ENCODE measurements at regions of chrX and their contacts with region 1.

Region 1: DNA sequence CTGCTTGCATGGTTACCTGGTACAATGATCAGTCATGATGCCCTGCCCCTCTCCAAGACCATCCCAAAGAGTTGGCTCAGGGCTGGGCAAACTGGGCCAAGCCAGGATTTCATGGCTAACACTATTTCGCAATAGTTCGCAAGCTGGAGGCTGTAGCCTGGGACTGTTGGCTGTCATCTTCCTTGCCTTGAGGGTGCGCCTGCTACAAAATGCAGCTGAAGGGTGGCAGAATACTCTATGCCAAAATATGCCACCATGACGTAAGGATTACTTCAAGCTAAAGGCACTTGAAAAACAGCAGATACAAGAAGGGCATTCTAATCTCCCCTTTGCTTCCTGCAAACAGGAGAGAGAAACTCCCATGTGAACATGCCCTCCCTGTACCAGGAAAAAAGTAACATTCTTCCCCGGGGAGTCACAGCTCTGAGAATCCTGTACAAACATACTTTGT is 21.0 kb downstream of the SAT1 start:
- DNase-seq: no peak
- ATAC-seq: peak; percentile 86

Region 2: DNA sequence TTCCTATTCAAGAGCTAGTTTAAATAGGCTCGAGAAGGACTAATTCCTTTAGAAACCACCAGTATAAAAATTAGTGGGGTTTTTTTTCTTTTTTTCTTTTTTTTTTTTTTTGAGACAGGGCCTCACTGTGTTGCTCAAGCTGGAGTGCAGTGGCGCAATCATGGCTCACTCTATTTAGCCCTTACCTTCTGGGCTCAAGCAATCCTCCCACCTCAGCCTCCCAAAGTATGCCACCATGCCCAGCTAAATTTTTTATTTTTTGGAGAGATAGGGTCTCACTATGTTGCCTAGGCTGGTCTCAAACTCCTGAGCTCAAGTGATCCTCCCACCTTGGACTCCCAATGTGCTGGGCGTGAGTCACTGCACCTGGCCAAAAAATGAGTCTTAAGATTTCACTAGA is 51.0 kb after region 1 on chrX:
- intact Hi-C with region 1: loop called (anchors 5 kb)
- DNase-seq: peak; percentile 66
- ATAC-seq: no peak

Region 3: DNA sequence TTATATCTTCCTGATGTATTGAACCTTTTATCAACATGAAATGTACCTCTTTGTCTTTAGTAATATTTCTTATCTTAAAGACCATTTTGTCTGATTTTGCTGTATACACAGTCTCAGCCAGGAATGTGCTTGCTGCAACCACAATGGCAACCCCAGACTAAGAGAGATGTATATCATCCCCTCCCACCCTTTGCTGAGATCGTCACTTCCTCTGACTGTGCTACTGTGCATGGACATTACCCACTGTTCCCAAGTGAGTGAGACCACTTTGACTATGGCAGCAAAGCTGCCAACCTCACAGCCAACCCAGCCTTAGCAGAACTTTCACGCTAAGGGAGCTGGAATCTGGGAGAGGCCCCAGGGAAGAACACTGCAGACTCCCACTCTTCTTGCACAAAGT is 296.8 kb after region 1 on chrX:
- intact Hi-C with region 1: no loop called
- DNase-seq: no peak
- ATAC-seq: no peak

Measured in Right ventricle myocardium inferior (tissue), 1 donor.